ENCODE measurements at regions of chr5 and their contacts with region 1.

Region 1: DNA sequence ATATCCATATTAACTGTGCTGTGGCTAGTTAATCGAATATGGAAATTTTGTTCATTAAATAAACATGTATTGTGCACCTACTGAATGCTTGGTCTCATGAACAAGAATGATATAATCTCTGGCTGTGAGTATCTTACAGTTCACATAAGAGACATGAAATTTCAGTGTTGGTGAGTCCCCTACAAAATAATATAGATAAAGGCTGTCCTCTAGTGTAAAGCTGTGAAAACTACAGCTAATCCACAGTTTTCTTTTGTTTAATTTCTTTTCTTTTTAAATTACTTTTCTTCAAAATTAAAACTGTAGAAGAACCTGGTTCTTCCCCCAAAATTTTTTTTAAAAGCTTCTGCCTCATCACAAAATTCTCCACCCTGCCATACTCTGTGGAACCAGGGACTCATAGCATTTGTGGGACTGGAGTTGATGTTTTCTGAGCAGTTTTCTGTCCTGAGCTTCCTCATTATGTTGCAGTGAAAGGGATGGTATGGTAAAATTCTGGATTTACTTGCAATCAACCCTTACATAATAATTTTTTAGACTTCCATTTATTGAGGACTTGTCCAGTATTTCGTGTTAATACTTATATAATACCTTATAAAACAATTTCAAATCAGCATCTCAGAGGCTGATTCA is 135.0 kb downstream of the STK32A start:
- DNase-seq: no peak
- ATAC-seq: no peak

Region 2: GRCh38 chr5:147223948-147224791 is 145.7 kb before region 1 on chr5:
- intact Hi-C with region 1: loop called (anchors 1 kb)
- DNase-seq: no peak
- ATAC-seq: peak; percentile 65

Region 3: GRCh38 chr5:147327421-147327820 is 42.4 kb before region 1 on chr5:
- intact Hi-C with region 1: no loop called
- DNase-seq: no peak
- ATAC-seq: no peak